Aorta (tissue), 5 donors: ENCODE measurements at regions of chr2 and their contacts with region 1.

Region 1: GRCh38 chr2:179340668-179341067 is 76.0 kb upstream of the SESTD1 start:
- DNase-seq: no peak
- ATAC-seq: no peak
- H3K4me3 ChIP-seq: no peak overlapping the region
- H3K27ac ChIP-seq: no peak overlapping the region
- H3K4me1 ChIP-seq: peaks cover 3 to 13% of the 10 kb centered on the region in 2 donors
- H3K27me3 ChIP-seq: no peaks in the 10 kb centered on the region

Region 2: GRCh38 chr2:179226203-179226960 is 114.3 kb before region 1 on chr2:
- intact Hi-C with region 1: loop called (anchors 5 to 10 kb)
- DNase-seq: no peak
- ATAC-seq: no peak
- H3K4me3 ChIP-seq: no peak overlapping the region
- H3K27ac ChIP-seq: no peak overlapping the region
- H3K4me1 ChIP-seq: peaks cover 1 to 9% of the 10 kb centered on the region in 2 donors
- H3K27me3 ChIP-seq: no peaks in the 10 kb centered on the region

Region 3: DNA sequence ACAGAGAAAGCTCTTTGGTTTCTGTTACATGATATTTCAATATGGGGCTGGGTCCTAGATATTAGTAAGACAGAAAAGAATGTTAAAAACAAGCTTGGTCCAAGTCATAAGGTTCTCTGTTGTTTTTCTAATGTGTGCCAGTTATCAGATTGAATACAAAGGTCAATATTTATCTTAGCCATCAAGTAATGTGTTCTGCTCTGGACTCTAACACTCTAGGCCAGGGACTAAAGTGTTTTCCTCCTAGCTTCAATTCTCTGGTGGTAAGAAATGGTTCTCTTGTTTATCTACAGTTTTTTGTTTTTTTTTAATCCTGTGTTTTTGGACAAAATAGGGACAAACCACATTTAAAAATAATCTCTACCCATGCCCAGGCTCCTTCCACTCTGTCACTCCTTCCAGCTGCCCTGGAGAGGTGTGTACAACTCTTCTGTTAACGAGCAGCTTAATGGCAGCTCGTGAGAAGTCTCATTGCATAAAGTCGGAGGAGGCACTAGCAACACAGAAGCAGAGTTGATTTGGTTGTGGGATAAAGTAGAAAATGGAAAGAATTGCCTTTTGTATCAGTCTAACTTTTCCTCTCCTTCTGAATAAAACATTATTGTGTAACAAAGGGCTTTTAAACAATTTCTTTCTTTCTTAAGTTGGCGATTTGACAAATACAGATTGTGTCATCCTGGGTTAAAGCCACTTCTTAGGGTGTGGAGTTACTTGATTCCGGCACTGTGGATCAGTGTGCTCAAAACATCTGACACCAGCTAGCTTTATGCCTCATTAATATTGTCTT is 68.1 kb before region 1 on chr2:
- intact Hi-C with region 1: loop called in 1 of 2 experiments (anchors 5 kb)
- DNase-seq: no peak
- ATAC-seq: peak; percentile 77
- H3K4me3 ChIP-seq: no peak overlapping the region
- H3K27ac ChIP-seq: peak overlapping the region; percentile 49 to 77
- H3K4me1 ChIP-seq: peaks cover 4 to 14% of the 10 kb centered on the region in 2 donors
- H3K27me3 ChIP-seq: no peaks in the 10 kb centered on the region